Calu3 (cell line): ENCODE measurements at regions of chr10 and their contacts with region 1.

Region 1: DNA sequence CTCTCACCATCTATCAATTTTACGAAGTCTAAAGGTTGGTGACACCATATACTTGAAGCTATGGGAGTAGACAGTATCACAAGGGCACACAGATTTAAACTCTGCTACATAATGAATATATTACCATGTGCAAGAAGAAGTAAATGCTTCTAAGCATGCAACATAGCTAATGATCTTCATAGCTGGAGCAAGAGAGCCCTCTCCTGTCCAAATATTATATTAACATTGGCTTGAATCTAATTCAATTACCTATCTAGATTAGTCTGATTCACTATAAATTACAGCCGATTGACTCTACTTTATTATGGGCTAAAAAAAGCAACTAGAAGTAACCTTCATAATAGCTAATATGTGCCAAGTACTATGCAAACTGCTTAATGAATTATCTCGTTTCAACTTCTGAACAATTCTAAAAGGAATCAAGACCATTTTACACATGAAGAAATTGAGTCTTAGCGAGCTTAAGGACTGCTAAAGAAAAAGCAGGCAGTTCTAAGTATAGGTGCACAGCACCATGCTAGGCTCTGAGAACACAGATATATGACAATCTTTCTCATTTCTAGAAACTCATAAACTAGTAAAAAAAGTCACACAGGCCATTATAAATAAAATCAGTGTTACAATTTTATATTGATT is 21.9 kb downstream of the FRA10AC1 start:
- DNase-seq: no peak
- H3K4me3 Mint-ChIP-seq: no peak overlapping the region
- H3K27ac Mint-ChIP-seq: no peak overlapping the region
- H3K4me1 Mint-ChIP-seq: no peaks in the 10 kb centered on the region
- H3K27me3 Mint-ChIP-seq: no peaks in the 10 kb centered on the region
- CTCF ChIP-seq: peak; percentile 25

Region 2: GRCh38 chr10:93554760-93555432 is 125.6 kb before region 1 on chr10:
- CTCF ChIA-PET with region 1: interaction called, 69 read pairs
- intact Hi-C with region 1: loop called (anchors 1 kb)
- DNase-seq: peak; percentile 81
- H3K4me3 Mint-ChIP-seq: no peak overlapping the region
- H3K27ac Mint-ChIP-seq: no peak overlapping the region
- H3K4me1 Mint-ChIP-seq: peaks cover 20% of the 10 kb centered on the region
- H3K27me3 Mint-ChIP-seq: no peaks in the 10 kb centered on the region
- CTCF ChIP-seq: peak; percentile 53

Region 3: GRCh38 chr10:93826355-93826754 is 145.8 kb after region 1 on chr10:
- CTCF ChIA-PET with region 1: no interaction called
- intact Hi-C with region 1: no loop called
- DNase-seq: no peak
- H3K4me3 Mint-ChIP-seq: no peak overlapping the region
- H3K27ac Mint-ChIP-seq: no peak overlapping the region
- H3K4me1 Mint-ChIP-seq: no peaks in the 10 kb centered on the region
- H3K27me3 Mint-ChIP-seq: peaks cover 41% of the 10 kb centered on the region
- CTCF ChIP-seq: no peak

Region 4: DNA sequence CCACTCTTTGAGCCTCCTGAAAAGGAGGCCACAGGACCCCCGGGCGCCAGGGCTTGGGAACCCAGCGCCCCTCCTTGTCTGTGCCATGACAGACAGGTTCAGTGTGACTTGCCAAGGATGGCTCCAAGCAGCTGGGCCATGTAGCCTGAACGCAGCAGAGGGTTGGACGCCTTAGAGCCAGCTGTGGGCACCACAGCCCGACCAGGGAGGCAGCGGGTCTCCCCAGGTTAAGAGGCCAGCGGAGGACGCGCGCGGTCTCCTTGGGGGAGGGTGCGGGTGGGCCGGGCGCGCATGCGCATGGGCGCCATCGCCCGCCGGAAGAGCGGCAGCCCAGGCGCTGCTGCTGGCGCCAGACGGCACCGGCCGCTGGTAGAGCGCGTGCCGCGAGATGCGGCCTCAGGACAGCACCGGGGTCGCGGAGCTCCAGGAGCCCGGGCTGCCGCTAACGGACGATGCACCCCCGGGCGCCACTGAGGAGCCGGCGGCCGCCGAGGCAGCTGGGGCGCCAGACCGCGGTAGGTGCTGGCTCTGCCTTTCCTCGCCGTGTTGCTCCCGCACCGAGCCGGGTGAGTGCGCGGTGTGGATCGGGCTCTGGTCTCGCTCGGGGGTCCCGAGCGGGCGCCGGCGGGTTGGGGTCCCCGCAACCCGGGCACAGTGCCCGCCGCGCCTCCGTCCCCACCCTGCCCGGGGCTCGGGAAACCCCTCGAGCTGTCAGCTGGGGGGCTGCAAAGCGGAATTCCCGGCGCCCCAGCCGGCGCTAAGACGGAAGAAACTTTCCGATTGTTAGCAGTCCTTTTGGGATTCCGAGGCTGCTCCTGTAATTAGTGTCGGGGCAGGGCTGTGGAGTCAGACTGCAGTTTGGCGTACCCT is 213.4 kb after region 1 on chr10 and contains the start of gene SLC35G1:
- CTCF ChIA-PET with region 1: no interaction called
- intact Hi-C with region 1: no loop called
- DNase-seq: peak; percentile 40
- H3K4me3 Mint-ChIP-seq: peak within 1 kb of the TSS; percentile 68
- H3K27ac Mint-ChIP-seq: no peak within 1 kb of the TSS
- H3K4me1 Mint-ChIP-seq: no peaks in the 10 kb centered on the region
- H3K27me3 Mint-ChIP-seq: peaks cover 16% of the 10 kb centered on the region
- CTCF ChIP-seq: no peak
- total RNA-seq, gene SLC35G1: 3.6 and 4.6 TPM in 2 replicates

Region 5: DNA sequence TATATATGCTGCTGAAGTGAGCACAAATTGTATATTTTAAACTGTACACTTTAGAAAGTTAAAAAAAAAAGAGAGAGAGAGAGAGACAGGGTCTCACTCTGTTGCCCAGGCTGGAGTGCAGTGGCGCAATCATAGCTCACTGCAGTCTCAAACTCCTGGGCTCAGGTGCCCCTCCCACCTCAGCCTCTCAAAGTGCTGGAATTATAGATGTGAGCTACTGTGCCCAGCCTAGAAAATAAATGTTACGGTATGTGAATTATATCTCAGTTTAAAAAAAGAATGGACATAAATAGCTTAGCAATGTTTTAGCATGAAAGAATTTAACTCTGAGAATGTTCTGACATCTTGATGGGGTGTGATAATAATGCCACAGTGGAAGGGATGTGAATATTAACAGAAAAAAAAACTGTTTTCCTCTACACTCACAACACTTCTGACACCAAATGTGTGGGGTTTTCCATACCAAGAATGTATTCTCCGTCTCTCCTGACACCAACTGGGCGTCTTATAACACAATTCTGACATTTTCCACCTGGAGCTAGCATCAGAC is 475.3 kb after region 1 on chr10:
- CTCF ChIA-PET with region 1: no interaction called
- intact Hi-C with region 1: no loop called
- DNase-seq: no peak
- H3K4me3 Mint-ChIP-seq: no peak overlapping the region
- H3K27ac Mint-ChIP-seq: no peak overlapping the region
- H3K4me1 Mint-ChIP-seq: no peaks in the 10 kb centered on the region
- H3K27me3 Mint-ChIP-seq: no peaks in the 10 kb centered on the region
- CTCF ChIP-seq: no peak